Right lobe of liver (tissue), 6 donors: ENCODE measurements at regions of chr15 and their contacts with region 1.

Region 1: GRCh38 chr15:90648137-90649070 is 68.7 kb upstream of the BLM start:
- DNase-seq: peak; percentile 61 to 72 (median 63)
- ATAC-seq: peak; percentile 80 to 86 (median 80)
- H3K4me3 ChIP-seq: no peak overlapping the region
- H3K27ac ChIP-seq: peak overlapping the region in 2 of 3 donors; percentile 44 to 50
- H3K4me1 ChIP-seq: no peaks in the 10 kb centered on the region
- H3K27me3 ChIP-seq: no peaks in the 10 kb centered on the region
- CTCF ChIP-seq: peak; percentile 85 to 90 (median 88)
- POLR2A ChIP-seq: no peak

Region 2: GRCh38 chr15:90886041-90886614 is 237.7 kb after region 1 on chr15:
- intact Hi-C with region 1: loop called in 1 of 2 experiments (anchors 5 kb)
- DNase-seq: peak; percentile 82 to 84 (median 83)
- ATAC-seq: peak; percentile 52 to 61 (median 56)
- H3K4me3 ChIP-seq: peak overlapping the region; percentile 54 to 62 (median 59)
- H3K27ac ChIP-seq: peak overlapping the region; percentile 90 to 99 (median 99)
- H3K4me1 ChIP-seq: peaks cover 0 to 54% (median 25%) of the 10 kb centered on the region in 4 donors
- H3K27me3 ChIP-seq: no peaks in the 10 kb centered on the region
- CTCF ChIP-seq: peak; percentile 95 to 98 (median 96)
- POLR2A ChIP-seq: no peak

Region 3: GRCh38 chr15:90915808-90916440 is 267.5 kb after region 1 on chr15:
- intact Hi-C with region 1: loop called in 1 of 2 experiments (anchors 10 kb)
- DNase-seq: peak; percentile 85 to 93 (median 90)
- ATAC-seq: peak; percentile 51 to 94 (median 78)
- H3K4me3 ChIP-seq: no peak overlapping the region
- H3K27ac ChIP-seq: peak overlapping the region in 2 of 3 donors; percentile 16 to 73
- H3K4me1 ChIP-seq: peaks cover 0 to 18% (median 0%) of the 10 kb centered on the region in 4 donors
- H3K27me3 ChIP-seq: no peaks in the 10 kb centered on the region
- CTCF ChIP-seq: no peak
- POLR2A ChIP-seq: peak; percentile 2